AG04450 (cell line): ENCODE measurements at regions of chr19 and their contacts with region 1.

Region 1: GRCh38 chr19:4075373-4075772 is 8.7 kb upstream of the ZBTB7A start:
- DNase-seq: no peak
- H3K4me3 ChIP-seq: no peak overlapping the region
- H3K27ac ChIP-seq: no peak overlapping the region
- H3K27me3 ChIP-seq: no peaks in the 10 kb centered on the region
- CTCF ChIP-seq: no peak

Region 2: GRCh38 chr19:3656073-3656746 is 419.2 kb before region 1 on chr19:
- CTCF ChIA-PET with region 1: no interaction called
- POLR2A ChIA-PET with region 1: interaction called, 11 read pairs
- DNase-seq: no peak
- H3K4me3 ChIP-seq: no peak overlapping the region
- H3K27ac ChIP-seq: peak overlapping the region; percentile 87
- H3K27me3 ChIP-seq: no peaks in the 10 kb centered on the region
- CTCF ChIP-seq: no peak

Region 3: GRCh38 chr19:4058034-4058692 is 17.2 kb before region 1 on chr19:
- CTCF ChIA-PET with region 1: no interaction called
- POLR2A ChIA-PET with region 1: no interaction called
- DNase-seq: peak; percentile 48
- H3K4me3 ChIP-seq: peak overlapping the region; percentile 22; the same call in 1 of the 2 replicates
- H3K27ac ChIP-seq: peak overlapping the region; percentile 84
- H3K27me3 ChIP-seq: no peaks in the 10 kb centered on the region
- CTCF ChIP-seq: peak; percentile 20